ENCODE measurements at regions of chr1 and their contacts with region 1.

Region 1: DNA sequence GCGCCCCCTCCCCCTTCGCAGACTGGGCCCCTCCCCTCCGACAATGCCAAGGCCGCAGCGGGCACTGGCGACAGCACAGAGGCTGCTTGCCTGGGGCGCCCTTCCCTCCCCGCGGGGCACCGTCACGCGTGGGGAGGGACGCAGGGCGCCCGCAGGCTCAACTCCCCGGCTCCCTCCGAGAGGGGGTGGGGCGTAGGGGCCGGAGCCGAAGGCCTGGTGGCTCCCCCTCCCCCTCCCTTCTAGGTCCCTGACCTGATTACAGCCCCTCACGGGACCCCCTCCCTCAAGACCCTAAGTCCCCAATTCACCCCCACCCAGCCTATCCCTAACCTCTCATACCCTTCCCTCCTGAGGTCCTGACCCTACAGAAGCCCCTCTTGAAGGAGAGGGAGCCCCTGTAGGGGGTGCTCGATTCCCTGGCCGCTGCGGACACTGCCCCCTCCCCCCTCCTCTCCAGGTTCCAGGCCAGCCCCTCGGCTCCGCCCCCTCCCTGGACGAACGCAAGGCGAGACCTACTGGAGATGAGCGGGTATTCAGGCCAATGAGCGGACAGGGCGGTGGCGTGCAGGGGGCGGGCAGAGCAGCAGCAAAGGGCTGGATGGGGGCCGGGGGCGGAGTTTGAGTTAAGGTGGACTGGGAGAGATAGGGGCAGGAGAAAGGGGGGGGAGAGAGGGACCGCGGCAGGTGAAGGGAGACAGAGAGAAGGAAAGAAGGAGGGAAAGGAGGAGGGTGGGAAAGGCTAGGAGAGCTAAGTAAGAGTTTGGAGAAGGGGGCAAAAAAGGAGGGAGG is 733 bp upstream of the ZBTB7B start:
- DNase-seq: peak; percentile 97
- ATAC-seq: peak; percentile 80
- H3K4me3 ChIP-seq: peak overlapping the region; percentile 69 to 74
- H3K27ac ChIP-seq: peak overlapping the region; percentile 94
- H3K4me1 ChIP-seq: peaks cover 33% of the 10 kb centered on the region
- H3K27me3 ChIP-seq: no peaks in the 10 kb centered on the region
- CTCF ChIP-seq: peak; percentile 80; the same call in 1 of the 2 replicates

Region 2: DNA sequence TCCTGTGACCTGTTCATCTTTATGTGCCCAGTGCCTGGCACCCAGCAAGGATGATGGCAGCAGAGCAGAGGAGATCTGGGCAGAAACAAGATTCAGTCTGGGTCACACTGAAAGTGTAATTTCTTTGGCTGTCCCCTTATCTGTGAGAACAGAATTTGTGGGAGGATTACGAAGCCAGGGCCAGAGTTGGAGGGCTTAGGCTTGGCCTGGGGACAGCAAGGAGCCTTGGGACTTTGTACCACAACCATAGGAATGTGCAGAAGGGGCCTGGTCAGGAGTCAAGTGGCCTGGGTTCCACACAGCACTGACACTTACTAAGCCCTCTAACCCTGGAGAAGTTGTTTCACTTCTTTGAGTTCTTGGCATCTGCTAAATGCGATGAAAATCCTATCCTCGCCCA is 78.2 kb before region 1 on chr1:
- CTCF ChIA-PET with region 1: no interaction called
- POLR2A ChIA-PET with region 1: no interaction called
- in situ Hi-C with region 1: no loop called
- intact Hi-C with region 1: no loop called
- DNase-seq: no peak
- ATAC-seq: no peak; the same call in 1 of the 2 replicates
- H3K4me3 ChIP-seq: no peak overlapping the region
- H3K27ac ChIP-seq: no peak overlapping the region
- H3K4me1 ChIP-seq: no peaks in the 10 kb centered on the region
- H3K27me3 ChIP-seq: no peaks in the 10 kb centered on the region
- CTCF ChIP-seq: no peak

Region 3: DNA sequence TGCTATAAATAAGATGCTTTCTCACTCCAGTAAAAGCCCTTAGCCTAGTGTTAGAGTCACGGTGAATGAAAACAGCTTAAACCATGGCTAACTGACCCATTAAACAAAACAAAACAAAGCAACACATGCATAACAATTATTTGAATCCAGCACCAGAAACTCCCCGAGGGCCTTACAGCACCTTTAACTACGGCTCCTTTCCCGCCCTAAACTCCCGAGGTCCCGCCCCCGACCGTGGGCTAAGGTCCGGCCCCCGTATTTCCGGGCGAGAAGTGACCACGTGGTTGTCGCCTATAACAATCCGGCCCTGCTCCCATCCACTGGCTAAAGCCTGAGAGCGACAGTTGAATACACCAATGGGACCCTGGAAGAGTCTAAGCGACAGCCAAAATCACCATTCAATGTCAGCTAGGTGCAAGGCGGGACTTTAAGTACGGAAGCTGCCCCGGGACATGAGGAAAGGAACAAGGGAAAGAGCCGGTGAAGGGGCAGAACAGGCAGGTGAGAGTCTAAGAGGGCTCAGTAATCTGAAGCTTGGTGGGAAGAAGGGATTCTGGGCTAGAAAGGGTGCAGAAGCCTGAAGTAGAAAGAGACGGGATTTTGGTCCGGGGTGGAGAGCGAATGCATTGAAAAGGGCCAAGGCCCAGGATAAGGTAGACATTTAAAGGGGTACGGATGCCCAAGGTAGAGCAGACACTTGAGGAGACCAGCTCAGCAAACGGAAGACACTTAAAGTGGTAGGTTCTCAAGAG is 18.8 kb before region 1 on chr1 and contains the start of gene FLAD1:
- CTCF ChIA-PET with region 1: interaction called, 8 read pairs
- POLR2A ChIA-PET with region 1: interaction called, 10 read pairs
- in situ Hi-C with region 1: no loop called
- intact Hi-C with region 1: no loop called
- DNase-seq: peak; percentile 100
- ATAC-seq: peak; percentile 99
- H3K4me3 ChIP-seq: peak within 1 kb of the TSS; percentile 55 to 86
- H3K27ac ChIP-seq: peak within 1 kb of the TSS; percentile 94
- H3K4me1 ChIP-seq: peaks cover 12% of the 10 kb centered on the region
- H3K27me3 ChIP-seq: no peaks in the 10 kb centered on the region
- CTCF ChIP-seq: no peak
- total RNA-seq, gene FLAD1: 72.8 TPM